GM12878 (cell line): ENCODE measurements at regions of chr4 and their contacts with region 1.

Region 1: DNA sequence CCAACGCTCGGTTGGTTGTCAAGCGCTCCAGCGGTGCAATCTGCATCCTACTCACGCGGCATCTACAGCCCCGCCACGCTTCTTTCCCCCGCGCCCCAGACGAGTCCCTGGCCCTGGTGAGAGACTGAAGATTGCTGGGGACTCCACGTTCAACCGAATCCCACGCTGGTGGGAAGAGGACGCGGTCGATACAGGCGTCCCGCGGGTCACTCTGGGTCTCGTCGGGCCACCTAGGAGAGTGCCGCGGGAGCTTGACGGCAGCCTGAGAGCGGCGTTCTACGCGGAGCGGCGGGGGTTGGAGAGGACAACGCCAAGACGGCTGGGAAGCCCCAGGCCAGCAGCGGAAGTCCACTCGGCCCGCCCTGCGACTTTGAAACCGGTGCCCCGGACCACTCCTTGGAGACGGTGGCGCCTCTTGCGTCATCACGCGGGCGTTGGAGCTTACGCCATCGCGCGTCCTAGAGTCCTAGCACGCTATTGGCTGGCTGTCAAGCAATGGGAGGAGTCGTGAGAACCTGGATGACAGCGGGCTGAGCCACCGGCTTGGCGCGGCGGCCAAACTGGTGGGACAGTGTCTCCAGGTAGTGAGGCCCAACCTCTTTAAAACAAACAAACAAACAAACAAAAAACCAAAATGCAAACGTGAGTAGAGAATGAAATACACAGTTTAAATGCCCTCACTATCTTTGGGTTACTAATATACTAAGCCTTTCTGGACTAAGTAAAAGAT is at the start of gene SCLT1:
- DNase-seq: peak; percentile 91
- ATAC-seq: peak; percentile 91
- H3K4me3 ChIP-seq: peak within 1 kb of the TSS; percentile 80
- H3K27ac ChIP-seq: peak within 1 kb of the TSS; percentile 78
- H3K4me1 ChIP-seq: peaks cover 3% of the 10 kb centered on the region; the same call in 1 of the 2 replicates
- H3K27me3 ChIP-seq: no peaks in the 10 kb centered on the region
- CTCF ChIP-seq: no peak
- EP300 ChIP-seq: no peak
- POLR2A ChIP-seq: peak; percentile 98
- RAD21 ChIP-seq: no peak
- polyA plus RNA-seq, gene SCLT1: 7.8 to 8.7 TPM

Region 2: GRCh38 chr4:128287871-128288688 is 805.3 kb before region 1 on chr4:
- CTCF ChIA-PET with region 1: no interaction called
- POLR2A ChIA-PET with region 1: interaction called, 7 read pairs
- RAD21 ChIA-PET with region 1: interaction called, 3 read pairs
- SMC1A ChIA-PET with region 1: interaction called, 4 read pairs
- in situ Hi-C with region 1: no loop called
- intact Hi-C with region 1: loop called (anchors 5 kb)
- DNase-seq: peak; percentile 97
- ATAC-seq: peak; percentile 86
- H3K4me3 ChIP-seq: peak overlapping the region; percentile 81
- H3K27ac ChIP-seq: peak overlapping the region; percentile 87
- H3K4me1 ChIP-seq: no peaks in the 10 kb centered on the region
- H3K27me3 ChIP-seq: no peaks in the 10 kb centered on the region
- CTCF ChIP-seq: peak in 1 of 3 experiments; percentile 2; a peak in 1 of 6 replicates
- EP300 ChIP-seq: 0 out of 4 replicates have a peak, but pooled peaks of 1 of the 2 experiments have one; percentile 52
- POLR2A ChIP-seq: peak; percentile 93
- RAD21 ChIP-seq: no peak

Region 3: GRCh38 chr4:128823025-128823661 is 270.2 kb before region 1 on chr4:
- CTCF ChIA-PET with region 1: no interaction called
- POLR2A ChIA-PET with region 1: no interaction called
- RAD21 ChIA-PET with region 1: interaction called, 3 read pairs
- SMC1A ChIA-PET with region 1: interaction called, 3 read pairs
- in situ Hi-C with region 1: loop called (anchors 10 kb)
- intact Hi-C with region 1: loop called (anchors 5 kb)
- DNase-seq: no peak
- ATAC-seq: no peak
- H3K4me3 ChIP-seq: no peak overlapping the region
- H3K27ac ChIP-seq: no peak overlapping the region
- H3K4me1 ChIP-seq: peaks cover 41% of the 10 kb centered on the region
- H3K27me3 ChIP-seq: no peaks in the 10 kb centered on the region
- CTCF ChIP-seq: no peak
- EP300 ChIP-seq: no peak
- POLR2A ChIP-seq: no peak
- RAD21 ChIP-seq: no peak

Region 4: GRCh38 chr4:128916832-128917231 is 176.5 kb before region 1 on chr4:
- CTCF ChIA-PET with region 1: no interaction called
- POLR2A ChIA-PET with region 1: interaction called, 7 read pairs
- RAD21 ChIA-PET with region 1: interaction called, 11 read pairs
- SMC1A ChIA-PET with region 1: interaction called, 5 read pairs
- in situ Hi-C with region 1: no loop called
- intact Hi-C with region 1: loop called (anchors 1 kb)
- DNase-seq: peak; percentile 84
- ATAC-seq: peak; percentile 94
- H3K4me3 ChIP-seq: no peak overlapping the region
- H3K27ac ChIP-seq: peak overlapping the region; percentile 86
- H3K4me1 ChIP-seq: peaks cover 35% of the 10 kb centered on the region
- H3K27me3 ChIP-seq: no peaks in the 10 kb centered on the region
- CTCF ChIP-seq: no peak
- EP300 ChIP-seq: peak; percentile 39 to 72; a peak in 3 of 4 replicates
- POLR2A ChIP-seq: no peak; the same call in 1 of the 2 replicates
- RAD21 ChIP-seq: 0 out of 2 replicates have a peak, but pooled peaks have one; percentile 6

Region 5: GRCh38 chr4:129077326-129077725 is 16.0 kb before region 1 on chr4:
- CTCF ChIA-PET with region 1: interaction called, 3 read pairs
- POLR2A ChIA-PET with region 1: interaction called, 8 read pairs
- RAD21 ChIA-PET with region 1: no interaction called
- SMC1A ChIA-PET with region 1: interaction called, 14 read pairs
- in situ Hi-C with region 1: no loop called
- intact Hi-C with region 1: no loop called
- DNase-seq: no peak
- ATAC-seq: no peak
- H3K4me3 ChIP-seq: no peak overlapping the region
- H3K27ac ChIP-seq: no peak overlapping the region
- H3K4me1 ChIP-seq: no peaks in the 10 kb centered on the region
- H3K27me3 ChIP-seq: no peaks in the 10 kb centered on the region
- CTCF ChIP-seq: no peak
- EP300 ChIP-seq: no peak
- POLR2A ChIP-seq: no peak
- RAD21 ChIP-seq: no peak

Region 6: DNA sequence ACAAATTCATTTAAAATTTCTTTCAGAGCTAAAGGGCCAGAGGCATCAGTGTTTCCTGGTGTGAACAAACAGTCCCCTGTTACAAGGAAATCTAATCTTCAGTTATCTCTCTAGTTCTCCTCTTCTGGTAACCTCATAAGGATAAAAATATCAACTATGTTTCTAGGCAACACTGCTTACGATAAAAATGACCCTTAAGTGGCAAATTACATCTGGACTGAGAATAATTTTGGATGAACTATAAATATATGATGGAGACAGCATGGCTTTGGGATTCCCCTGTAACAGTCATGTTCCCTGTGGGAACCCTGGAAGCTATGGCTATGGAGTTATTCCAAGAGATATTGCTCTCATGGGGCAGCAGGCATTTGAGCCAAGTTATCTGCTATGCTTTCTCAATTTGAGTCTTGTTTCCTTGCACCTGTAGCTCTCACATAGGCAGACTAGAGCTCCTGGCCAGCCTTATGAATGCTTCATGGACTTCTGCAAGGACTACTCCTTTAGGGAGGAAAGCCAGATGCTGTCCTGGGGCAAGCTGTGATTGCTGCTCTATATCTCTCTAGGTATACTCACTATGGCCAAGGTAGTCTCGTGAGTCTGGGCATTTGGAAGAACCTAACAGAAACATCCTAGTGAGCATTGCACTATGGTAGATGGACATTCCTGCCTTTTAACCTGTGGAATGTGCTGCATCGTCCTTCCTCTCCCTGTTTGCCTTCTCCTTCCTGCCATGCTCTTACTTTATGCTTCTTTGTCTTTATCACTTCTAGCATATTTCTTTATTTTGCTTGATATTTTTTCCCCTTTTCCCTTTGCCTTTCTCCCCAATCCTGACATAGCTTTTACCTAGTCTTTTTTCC is 16.8 kb after region 1 on chr4:
- CTCF ChIA-PET with region 1: interaction called, 7 read pairs
- POLR2A ChIA-PET with region 1: interaction called, 3 read pairs
- RAD21 ChIA-PET with region 1: interaction called, 4 read pairs
- SMC1A ChIA-PET with region 1: interaction called, 14 read pairs
- in situ Hi-C with region 1: no loop called
- intact Hi-C with region 1: no loop called
- DNase-seq: no peak
- ATAC-seq: no peak
- H3K4me3 ChIP-seq: no peak overlapping the region
- H3K27ac ChIP-seq: no peak overlapping the region
- H3K4me1 ChIP-seq: no peaks in the 10 kb centered on the region
- H3K27me3 ChIP-seq: no peaks in the 10 kb centered on the region
- CTCF ChIP-seq: no peak
- EP300 ChIP-seq: no peak
- POLR2A ChIP-seq: no peak
- RAD21 ChIP-seq: no peak

Region 7: GRCh38 chr4:129420637-129421036 is 327.3 kb after region 1 on chr4:
- CTCF ChIA-PET with region 1: no interaction called
- POLR2A ChIA-PET with region 1: no interaction called
- RAD21 ChIA-PET with region 1: no interaction called
- SMC1A ChIA-PET with region 1: no interaction called
- in situ Hi-C with region 1: no loop called
- intact Hi-C with region 1: no loop called
- DNase-seq: no peak
- ATAC-seq: no peak
- H3K4me3 ChIP-seq: no peak overlapping the region
- H3K27ac ChIP-seq: no peak overlapping the region
- H3K4me1 ChIP-seq: no peaks in the 10 kb centered on the region
- H3K27me3 ChIP-seq: no peaks in the 10 kb centered on the region
- CTCF ChIP-seq: no peak
- EP300 ChIP-seq: no peak
- POLR2A ChIP-seq: no peak
- RAD21 ChIP-seq: no peak